PC-9 (cell line): ENCODE measurements at regions of chr1 and their contacts with region 1.

Region 1: DNA sequence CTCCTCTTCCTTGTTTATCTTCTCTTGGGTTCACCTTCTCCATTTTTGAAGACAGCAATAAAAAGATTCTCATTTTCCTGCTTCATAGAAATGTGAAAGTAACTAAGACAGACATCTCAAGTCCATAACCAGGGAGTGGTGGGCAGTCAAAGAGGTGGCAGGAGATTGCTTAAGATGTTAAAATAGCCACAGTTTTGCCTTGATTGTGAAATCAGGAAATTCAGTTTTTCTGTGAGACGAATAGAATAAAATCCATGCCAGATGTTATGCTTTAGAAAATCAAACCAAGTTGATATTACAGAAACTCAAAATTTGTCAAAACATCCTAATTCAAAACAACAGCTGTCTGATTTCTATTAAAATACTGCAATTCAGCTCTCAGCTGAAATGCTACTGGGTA is 57.2 kb downstream of the TNN start:
- DNase-seq: no peak
- H3K4me3 ChIP-seq: no peak overlapping the region
- H3K27ac ChIP-seq: no peak overlapping the region
- H3K4me1 ChIP-seq: no peaks in the 10 kb centered on the region
- H3K27me3 ChIP-seq: no peaks in the 10 kb centered on the region
- CTCF ChIP-seq: no peak

Region 2: GRCh38 chr1:175033953-175034352 is 90.9 kb before region 1 on chr1:
- CTCF ChIA-PET with region 1: interaction called, 19 read pairs
- POLR2A ChIA-PET with region 1: interaction called, 12 read pairs
- intact Hi-C with region 1: loop called (anchors 1 kb)
- DNase-seq: no peak
- H3K4me3 ChIP-seq: no peak overlapping the region
- H3K27ac ChIP-seq: no peak overlapping the region
- H3K4me1 ChIP-seq: peaks cover 37% of the 10 kb centered on the region
- H3K27me3 ChIP-seq: no peaks in the 10 kb centered on the region
- CTCF ChIP-seq: no peak

Region 3: GRCh38 chr1:175146529-175147213 is 21.8 kb after region 1 on chr1:
- CTCF ChIA-PET with region 1: interaction called, 12 read pairs
- POLR2A ChIA-PET with region 1: no interaction called
- intact Hi-C with region 1: no loop called
- DNase-seq: peak in 1 of 2 experiments; percentile 59
- H3K4me3 ChIP-seq: no peak overlapping the region
- H3K27ac ChIP-seq: no peak overlapping the region
- H3K4me1 ChIP-seq: peaks cover 8% of the 10 kb centered on the region
- H3K27me3 ChIP-seq: 0 out of 2 replicates have a peak, but pooled peaks cover 9% of the 10 kb centered on the region
- CTCF ChIP-seq: peak; percentile 86